ENCODE measurements at regions of chr10 and their contacts with region 1.

Region 1: GRCh38 chr10:68074775-68075549 is at the start of gene HERC4:
- DNase-seq: peak; percentile 96 to 97 (median 97)
- ATAC-seq: peak; percentile 99
- H3K4me3 ChIP-seq: peak within 1 kb of the TSS; percentile 77 to 97 (median 92)
- H3K27ac ChIP-seq: peak within 1 kb of the TSS; percentile 86 to 100 (median 98)
- H3K4me1 ChIP-seq: peaks cover 8 to 39% (median 33%) of the 10 kb centered on the region in 12 donors
- H3K27me3 ChIP-seq: no peaks in the 10 kb centered on the region
- CTCF ChIP-seq: no peak
- POLR2A ChIP-seq: peak in 1 of 2 donors; percentile 68
- total RNA-seq, gene HERC4: 16.6 to 39.4 (median 30.6) TPM

Region 2: DNA sequence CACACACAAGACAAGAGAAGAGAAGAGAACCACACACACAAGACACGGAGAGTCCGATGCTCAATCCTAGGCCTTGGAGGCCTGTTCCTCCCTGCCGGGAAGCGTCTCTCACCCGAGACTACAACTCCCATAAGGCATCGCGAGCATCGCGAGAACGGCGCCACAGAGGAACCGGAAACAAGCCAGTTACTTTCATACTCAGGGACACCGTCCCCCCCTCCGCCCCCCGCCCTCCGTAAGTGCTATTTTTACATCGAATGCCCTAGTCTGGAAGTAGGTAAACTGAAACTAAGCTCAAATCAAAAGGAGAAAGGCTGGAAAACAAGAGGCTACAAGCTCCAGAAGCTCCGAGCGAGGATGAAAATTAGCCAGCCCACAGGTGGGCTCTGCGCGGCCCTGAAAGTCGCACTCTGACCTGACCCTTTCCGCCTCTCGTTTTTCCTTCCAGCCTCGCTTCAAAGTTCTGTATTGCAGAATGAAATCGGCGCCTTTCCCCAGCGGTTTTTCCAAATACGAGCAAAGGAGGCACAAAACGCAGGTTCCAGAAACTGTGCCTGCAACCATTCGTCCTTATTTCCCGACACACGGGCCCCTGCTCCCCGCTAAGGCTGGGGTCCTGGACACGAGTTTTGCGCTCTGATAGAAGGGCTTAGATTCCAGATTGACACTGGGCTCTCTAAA is 225.5 kb before region 1 on chr10:
- intact Hi-C with region 1: loop called in 2 of 10 experiments (anchors 10 kb)
- DNase-seq: peak; percentile 95 to 98 (median 96)
- ATAC-seq: peak; percentile 98 to 99 (median 99)
- H3K4me3 ChIP-seq: peak overlapping the region; percentile 55 to 99 (median 80)
- H3K27ac ChIP-seq: peak overlapping the region; percentile 89 to 99 (median 95)
- H3K4me1 ChIP-seq: peaks cover 0 to 8% (median 5%) of the 10 kb centered on the region in 12 donors
- H3K27me3 ChIP-seq: no peaks in the 10 kb centered on the region
- CTCF ChIP-seq: peak in 1 of 12 donors; percentile 34
- POLR2A ChIP-seq: peak in 1 of 2 donors; percentile 53

Region 3: GRCh38 chr10:67861750-67862460 is 213.1 kb before region 1 on chr10:
- intact Hi-C with region 1: loop called in 3 of 10 experiments (anchors 5 to 10 kb)
- DNase-seq: no peak
- ATAC-seq: no peak
- H3K4me3 ChIP-seq: no peak overlapping the region
- H3K27ac ChIP-seq: no peak overlapping the region
- H3K4me1 ChIP-seq: peaks cover 0 to 5% (median 0%) of the 10 kb centered on the region in 12 donors
- H3K27me3 ChIP-seq: no peaks in the 10 kb centered on the region
- CTCF ChIP-seq: no peak
- POLR2A ChIP-seq: no peak

Region 4: DNA sequence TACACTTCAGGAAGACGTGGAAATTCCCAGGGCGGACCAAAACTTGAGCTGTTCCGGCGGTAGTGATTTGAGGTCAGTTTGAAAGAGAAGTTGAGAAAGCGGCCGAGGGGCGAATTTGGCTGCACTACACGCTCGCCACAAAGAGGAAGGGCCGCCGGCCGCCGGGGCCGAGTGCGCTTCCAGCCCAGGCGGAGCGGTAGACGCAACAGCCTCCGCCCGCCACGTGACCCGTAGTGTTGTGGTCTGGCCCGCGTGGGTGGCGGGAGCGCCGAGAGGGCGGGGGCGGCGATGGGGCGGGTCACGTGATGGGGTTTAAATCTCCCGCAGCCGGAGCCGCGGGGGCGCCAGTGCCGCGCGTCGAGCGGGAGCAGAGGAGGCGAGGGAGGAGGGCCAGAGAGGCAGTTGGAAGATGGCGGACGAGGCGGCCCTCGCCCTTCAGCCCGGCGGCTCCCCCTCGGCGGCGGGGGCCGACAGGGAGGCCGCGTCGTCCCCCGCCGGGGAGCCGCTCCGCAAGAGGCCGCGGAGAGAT is 190.6 kb before region 1 on chr10 and contains the start of gene SIRT1:
- intact Hi-C with region 1: loop called in 6 of 10 experiments (anchors 2 to 10 kb)
- DNase-seq: peak; percentile 97 to 99 (median 98)
- ATAC-seq: peak; percentile 95 to 97 (median 96)
- H3K4me3 ChIP-seq: peak within 1 kb of the TSS; percentile 58 to 98 (median 82)
- H3K27ac ChIP-seq: peak within 1 kb of the TSS; percentile 84 to 98 (median 94)
- H3K4me1 ChIP-seq: peaks cover 0 to 30% (median 13%) of the 10 kb centered on the region in 12 donors
- H3K27me3 ChIP-seq: no peaks in the 10 kb centered on the region
- CTCF ChIP-seq: peak in 3 of 12 donors; percentile 9 to 25 (median 10)
- POLR2A ChIP-seq: peak; percentile 43 to 96
- total RNA-seq, gene SIRT1: 9.4 to 19.1 (median 12.5) TPM

Region 5: DNA sequence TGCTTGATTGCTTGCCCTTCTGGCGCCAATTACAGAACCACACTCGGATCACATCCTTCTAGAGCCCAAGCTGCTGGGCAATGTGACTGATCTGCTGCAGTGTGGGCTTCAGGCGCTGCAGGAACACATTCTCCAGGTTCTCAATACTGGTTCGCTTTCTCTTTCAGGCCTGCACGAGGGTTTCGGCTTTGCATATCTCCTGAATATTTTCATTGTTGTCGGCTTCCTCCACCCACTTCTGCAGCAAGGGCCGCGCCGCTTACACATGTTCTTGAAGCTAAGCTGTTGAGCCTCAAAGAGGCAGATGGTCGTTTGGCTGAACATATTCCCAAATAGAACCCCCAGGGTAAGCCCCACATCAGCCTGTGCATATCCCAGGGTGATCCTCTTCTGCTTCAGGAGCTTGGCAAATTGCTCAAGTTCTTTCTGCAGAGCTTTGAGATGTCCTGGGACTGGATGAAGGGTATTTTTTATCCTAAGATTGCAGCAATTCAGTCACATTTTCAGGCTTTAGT is 64.5 kb before region 1 on chr10:
- intact Hi-C with region 1: loop called in 1 of 10 experiments (anchors 10 kb)
- DNase-seq: no peak
- ATAC-seq: no peak
- H3K4me3 ChIP-seq: no peak overlapping the region
- H3K27ac ChIP-seq: no peak overlapping the region
- H3K4me1 ChIP-seq: no peaks in the 10 kb centered on the region
- H3K27me3 ChIP-seq: no peaks in the 10 kb centered on the region
- CTCF ChIP-seq: no peak
- POLR2A ChIP-seq: no peak

Region 6: GRCh38 chr10:68331455-68332258 is 256.7 kb after region 1 on chr10 and contains the start of gene HNRNPH3:
- intact Hi-C with region 1: loop called in 6 of 10 experiments (anchors 5 to 10 kb)
- DNase-seq: peak; percentile 98 to 99 (median 99)
- ATAC-seq: peak; percentile 85 to 94 (median 92)
- H3K4me3 ChIP-seq: peak within 1 kb of the TSS; percentile 70 to 98 (median 90)
- H3K27ac ChIP-seq: peak within 1 kb of the TSS; percentile 95 to 100 (median 99)
- H3K4me1 ChIP-seq: peaks cover 7 to 64% (median 36%) of the 10 kb centered on the region in 12 donors
- H3K27me3 ChIP-seq: no peaks in the 10 kb centered on the region
- CTCF ChIP-seq: peak in 4 of 12 donors; percentile 6 to 16 (median 14)
- POLR2A ChIP-seq: peak; percentile 74 to 99
- total RNA-seq, gene HNRNPH3: 23.7 to 130 (median 83.1) TPM

Measured in heart left ventricle (tissue), 16 donors.